ENCODE measurements at regions of chr12 and their contacts with region 1.

Region 1: GRCh38 chr12:56839915-56840325 is 76.8 kb downstream of the HSD17B6 start:
- DNase-seq: no peak
- H3K4me3 ChIP-seq: no peak overlapping the region
- H3K27ac ChIP-seq: no peak overlapping the region
- H3K4me1 ChIP-seq: peaks cover 0 to 4% of the 10 kb centered on the region in 2 donors
- H3K27me3 ChIP-seq: no peaks in the 10 kb centered on the region
- CTCF ChIP-seq: peak in 2 of 3 donors; percentile 27 to 29
- POLR2A ChIP-seq: no peak

Region 2: GRCh38 chr12:56529290-56530055 is 310.4 kb before region 1 on chr12:
- intact Hi-C with region 1: loop called (anchors 5 kb)
- DNase-seq: no peak
- H3K4me3 ChIP-seq: no peak overlapping the region
- H3K27ac ChIP-seq: no peak overlapping the region
- H3K4me1 ChIP-seq: peaks cover 0 to 3% of the 10 kb centered on the region in 2 donors
- H3K27me3 ChIP-seq: no peaks in the 10 kb centered on the region
- CTCF ChIP-seq: no peak
- POLR2A ChIP-seq: no peak